Colonic mucosa (tissue), 4 donors: ENCODE measurements at regions of chr6 and their contacts with region 1.

Region 1: GRCh38 chr6:110039981-110040383 is 61.9 kb downstream of the GPR6 start:
- DNase-seq: peak; percentile 45
- H3K4me3 ChIP-seq: peak overlapping the region; percentile 40
- H3K27ac ChIP-seq: peak overlapping the region; percentile 32
- H3K4me1 ChIP-seq: no peaks in the 10 kb centered on the region
- H3K27me3 ChIP-seq: no peaks in the 10 kb centered on the region
- CTCF ChIP-seq: no peak

Region 2: GRCh38 chr6:109526905-109527628 is 512.9 kb before region 1 on chr6:
- intact Hi-C with region 1: loop called (anchors 5 kb)
- DNase-seq: peak; percentile 31
- H3K4me3 ChIP-seq: no peak overlapping the region
- H3K27ac ChIP-seq: no peak overlapping the region
- H3K4me1 ChIP-seq: no peaks in the 10 kb centered on the region
- H3K27me3 ChIP-seq: no peaks in the 10 kb centered on the region
- CTCF ChIP-seq: peak; percentile 63

Region 3: DNA sequence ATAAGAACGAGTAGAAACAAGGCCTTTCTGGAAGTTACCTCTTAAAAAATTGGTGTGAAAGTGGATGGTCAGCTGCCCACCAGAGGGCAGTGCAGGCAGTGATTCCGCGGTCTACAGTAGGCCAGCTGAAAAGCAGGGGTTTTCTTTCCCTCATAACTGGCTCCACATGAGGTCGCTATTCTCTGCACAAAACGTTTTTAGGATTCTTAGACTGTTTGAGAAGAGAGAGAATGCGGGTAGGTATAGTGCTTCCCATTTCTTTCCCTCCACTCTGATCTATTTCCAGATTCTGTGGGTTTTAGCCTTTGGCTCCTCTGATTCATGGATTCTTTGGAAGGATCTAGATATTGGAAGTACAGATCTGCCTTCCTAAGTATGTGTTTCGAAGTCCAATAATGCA is 334.7 kb before region 1 on chr6:
- intact Hi-C with region 1: loop called (anchors 2 kb)
- DNase-seq: peak; percentile 84
- H3K4me3 ChIP-seq: no peak overlapping the region
- H3K27ac ChIP-seq: no peak overlapping the region
- H3K4me1 ChIP-seq: no peaks in the 10 kb centered on the region
- H3K27me3 ChIP-seq: no peaks in the 10 kb centered on the region
- CTCF ChIP-seq: peak; percentile 93